Activated CD4-positive, alpha-beta memory T cell treated with anti-CD3 and anti-CD28 coated beads, Interleukin-2, amount 10 ng/mL, durations not matched to agents 7 days and 5 days (primary cell): ENCODE measurements at regions of chr1 and their contacts with region 1.

Region 1: DNA sequence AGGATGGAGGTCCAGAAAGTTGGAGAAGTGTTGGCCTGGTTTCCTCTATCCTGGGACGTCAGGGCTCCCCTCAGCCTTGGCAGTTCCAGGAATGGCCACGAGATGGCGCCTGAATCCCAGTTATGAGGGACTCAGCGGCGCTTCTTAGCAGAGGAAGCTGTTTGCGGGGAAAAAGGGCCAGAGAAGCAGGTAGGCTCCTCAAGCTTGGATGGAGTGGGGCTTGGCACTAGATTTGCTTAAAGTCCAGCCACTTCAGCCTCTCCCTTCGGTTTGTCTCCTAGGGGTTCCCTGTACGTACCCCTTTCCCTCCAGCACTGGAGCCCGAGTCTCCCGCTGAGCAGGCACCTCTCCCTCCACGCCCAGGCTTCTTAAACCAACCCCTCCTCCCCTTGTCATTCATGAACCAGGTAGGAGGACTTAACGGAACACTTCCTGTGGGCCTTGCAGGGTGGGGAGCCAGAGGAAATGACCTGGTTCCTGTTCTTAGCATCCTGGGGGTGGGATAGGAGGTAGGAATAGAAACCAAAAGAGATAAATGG is 32.0 kb upstream of the TENT5B start:
- DNase-seq: peak; percentile 90
- H3K4me3 Mint-ChIP-seq: peak overlapping the region; percentile 76
- H3K27ac Mint-ChIP-seq: peak overlapping the region; percentile 78
- H3K4me1 Mint-ChIP-seq: peaks cover 24% of the 10 kb centered on the region
- H3K27me3 Mint-ChIP-seq: peaks cover 4% of the 10 kb centered on the region

Region 2: DNA sequence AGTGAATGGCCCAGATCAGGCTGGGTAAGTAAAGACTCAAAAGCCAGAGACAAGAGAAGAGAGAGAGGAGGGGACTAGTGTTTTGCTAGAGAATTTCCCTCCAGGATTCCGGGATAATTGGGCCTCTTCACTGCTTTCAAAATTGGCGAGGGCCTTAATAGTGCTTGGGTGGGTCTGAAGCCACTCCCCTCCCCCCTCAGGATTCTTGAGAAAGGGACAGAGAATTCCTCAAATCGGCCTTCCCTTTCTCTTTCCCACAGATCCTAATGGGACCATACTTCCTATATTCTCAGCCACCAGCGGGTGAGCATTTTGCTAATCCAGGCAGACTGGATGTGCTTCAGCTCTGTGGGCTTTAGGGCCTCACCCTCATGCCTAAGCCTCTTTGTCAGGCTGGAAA is 169.8 kb before region 1 on chr1:
- CTCF ChIA-PET with region 1: no interaction called
- POLR2A ChIA-PET with region 1: no interaction called
- DNase-seq: no peak
- H3K4me3 Mint-ChIP-seq: no peak overlapping the region
- H3K27ac Mint-ChIP-seq: no peak overlapping the region
- H3K4me1 Mint-ChIP-seq: peaks cover 10% of the 10 kb centered on the region
- H3K27me3 Mint-ChIP-seq: no peaks in the 10 kb centered on the region

Region 3: DNA sequence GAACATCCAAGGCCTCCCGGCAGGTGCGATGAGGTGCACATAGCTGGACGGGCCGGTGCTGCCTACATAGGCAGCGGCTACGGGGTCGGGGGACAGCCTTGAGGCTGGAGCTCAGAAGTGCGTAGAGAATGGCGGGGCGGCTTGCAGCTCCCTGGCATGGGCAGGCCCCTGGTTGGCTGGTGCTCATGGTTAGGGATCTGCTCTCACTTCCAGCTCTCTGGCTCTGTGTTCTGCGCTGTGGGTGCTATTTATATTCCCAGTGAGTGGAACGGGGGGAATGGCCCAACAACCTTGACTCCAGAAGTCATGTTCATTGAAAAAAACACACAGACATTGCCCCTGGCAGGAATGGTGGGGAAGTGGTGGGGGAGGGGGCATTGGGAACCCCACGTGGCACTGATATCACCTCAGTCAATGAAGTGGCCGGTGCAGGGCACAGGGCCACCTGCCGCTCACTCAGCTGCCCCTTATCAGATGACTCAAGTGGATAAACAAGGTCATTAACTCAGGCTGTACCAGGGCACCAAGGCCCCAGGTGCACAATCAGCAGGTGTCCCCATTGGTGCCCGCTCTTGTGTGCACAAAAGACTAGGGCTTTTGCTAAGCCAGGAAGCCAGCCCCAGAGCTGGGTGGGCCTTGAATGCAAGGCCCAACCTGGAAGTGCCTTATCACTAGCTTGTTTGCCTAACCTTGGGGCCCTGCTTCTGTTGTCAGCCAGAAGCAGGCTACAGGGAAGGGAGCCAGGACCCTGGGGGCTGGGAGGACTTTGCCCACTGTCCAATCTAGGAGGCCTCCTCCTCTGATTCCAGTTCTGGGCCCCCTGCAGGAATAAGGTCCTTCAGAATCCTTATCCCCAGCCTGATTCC is 130.7 kb before region 1 on chr1 and contains the start of gene NR0B2:
- CTCF ChIA-PET with region 1: no interaction called
- POLR2A ChIA-PET with region 1: no interaction called
- DNase-seq: no peak
- H3K4me3 Mint-ChIP-seq: no peak within 1 kb of the TSS
- H3K27ac Mint-ChIP-seq: no peak within 1 kb of the TSS
- H3K4me1 Mint-ChIP-seq: no peaks in the 10 kb centered on the region
- H3K27me3 Mint-ChIP-seq: peaks cover 5% of the 10 kb centered on the region
- total RNA-seq, gene NR0B2: not detected

Region 4: DNA sequence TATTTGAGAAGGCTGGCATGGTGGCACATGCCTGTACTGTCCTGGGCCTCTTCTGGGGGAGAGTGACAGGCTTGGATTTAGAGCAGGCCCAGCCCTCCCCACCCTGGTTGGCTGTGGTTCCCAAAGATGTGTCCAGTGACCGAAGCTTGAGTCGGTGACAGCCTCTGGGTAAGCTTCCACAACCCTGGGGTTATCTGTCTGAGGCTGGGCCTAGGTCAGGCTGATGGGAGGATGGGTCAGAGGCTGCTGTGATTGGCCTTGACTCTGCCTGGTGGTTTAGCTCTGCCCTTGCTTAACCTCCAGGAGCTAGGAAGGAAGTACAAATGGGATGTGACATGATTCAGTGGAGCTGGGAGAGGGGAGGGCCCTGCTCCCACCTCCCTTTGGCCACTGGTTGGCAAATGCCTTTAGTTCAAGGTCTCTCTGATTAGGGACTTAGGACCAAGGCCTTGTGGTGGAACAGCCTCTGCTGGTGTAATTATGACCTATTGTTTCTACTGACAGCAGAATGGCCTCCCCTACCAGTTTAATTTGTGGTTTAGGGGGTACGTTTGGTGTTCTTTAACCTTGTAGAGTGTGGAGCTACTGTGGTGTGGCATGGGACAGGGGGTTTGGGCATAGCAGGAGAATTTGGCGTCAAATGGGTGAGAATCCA is 106.6 kb before region 1 on chr1:
- CTCF ChIA-PET with region 1: no interaction called
- POLR2A ChIA-PET with region 1: no interaction called
- DNase-seq: no peak
- H3K4me3 Mint-ChIP-seq: no peak overlapping the region
- H3K27ac Mint-ChIP-seq: no peak overlapping the region
- H3K4me1 Mint-ChIP-seq: peaks cover 5% of the 10 kb centered on the region
- H3K27me3 Mint-ChIP-seq: no peaks in the 10 kb centered on the region

Region 5: DNA sequence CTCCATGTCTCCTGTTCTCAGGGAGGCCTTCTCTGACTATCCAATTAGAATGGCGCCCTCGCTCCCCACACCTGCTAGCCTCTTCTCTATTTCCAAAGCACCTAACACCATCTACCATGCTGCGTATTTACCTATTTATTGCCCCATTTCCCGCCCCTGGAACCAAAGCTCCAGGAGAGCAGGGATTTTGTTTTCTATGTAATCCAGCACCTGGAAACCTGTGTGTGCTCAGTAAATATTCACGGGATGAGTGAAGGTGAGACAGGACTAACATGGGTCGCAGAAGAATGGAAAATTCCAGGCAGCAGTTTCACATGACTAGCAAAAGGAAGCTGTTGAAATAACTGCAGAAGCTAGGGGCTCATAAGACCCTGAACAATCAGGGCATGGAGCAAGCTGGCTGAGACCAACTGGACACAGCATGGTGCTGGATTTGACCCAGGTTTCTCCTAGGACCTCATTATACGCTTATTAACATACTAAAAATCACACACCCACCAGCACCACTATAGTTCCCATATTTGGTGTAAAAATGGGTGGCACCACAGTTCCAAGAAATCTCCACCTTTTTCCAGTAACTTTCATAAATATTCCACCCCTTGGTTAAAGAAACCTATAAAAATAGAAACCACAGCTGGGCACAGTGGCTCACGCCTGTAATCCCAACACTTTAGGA is 17.0 kb before region 1 on chr1:
- CTCF ChIA-PET with region 1: interaction called, 17 read pairs
- POLR2A ChIA-PET with region 1: no interaction called
- DNase-seq: no peak
- H3K4me3 Mint-ChIP-seq: no peak overlapping the region
- H3K27ac Mint-ChIP-seq: no peak overlapping the region
- H3K4me1 Mint-ChIP-seq: peaks cover 7% of the 10 kb centered on the region
- H3K27me3 Mint-ChIP-seq: peaks cover 10% of the 10 kb centered on the region

Region 6: DNA sequence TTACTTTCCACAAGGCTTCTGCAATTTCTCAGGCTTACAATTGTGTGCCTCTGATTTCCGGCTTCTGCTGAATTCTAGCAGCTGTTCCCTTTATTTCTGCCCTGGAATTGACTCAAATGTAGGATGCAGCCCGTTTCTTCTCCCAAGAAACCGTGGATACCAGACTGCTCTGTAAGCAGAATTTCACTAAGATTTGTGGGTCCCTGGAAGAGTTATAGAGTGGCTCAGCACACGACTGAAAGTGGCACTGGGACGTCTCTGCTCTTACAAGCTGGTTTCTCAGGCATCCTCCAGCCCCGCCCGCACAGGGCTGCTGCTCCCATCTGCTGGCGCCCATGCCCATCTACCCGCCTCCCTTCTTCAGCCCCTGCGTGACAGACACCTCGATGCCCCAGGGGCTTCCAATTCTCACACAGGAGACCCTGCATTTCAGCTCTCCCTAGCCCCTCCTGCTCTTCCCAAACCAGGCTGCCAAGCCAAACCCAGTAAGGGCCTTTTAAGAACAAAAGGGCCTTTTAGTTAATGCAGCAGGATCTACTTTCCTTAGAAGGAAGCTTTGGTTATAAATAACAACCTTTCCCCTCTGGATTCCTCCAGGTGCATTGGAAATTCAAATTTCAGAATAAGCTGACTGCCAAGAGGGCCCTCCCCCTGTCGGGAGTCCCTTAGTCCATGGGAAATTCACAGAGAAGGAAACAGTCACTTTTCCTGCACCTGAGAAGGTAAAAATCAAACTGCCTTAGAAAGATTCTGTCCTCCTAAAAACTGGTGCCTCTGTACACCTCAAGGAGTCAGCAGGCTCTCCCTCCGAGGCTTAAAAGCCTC is 13.3 kb after region 1 on chr1:
- CTCF ChIA-PET with region 1: interaction called, 28 read pairs
- POLR2A ChIA-PET with region 1: no interaction called
- DNase-seq: no peak
- H3K4me3 Mint-ChIP-seq: no peak overlapping the region
- H3K27ac Mint-ChIP-seq: no peak overlapping the region
- H3K4me1 Mint-ChIP-seq: no peaks in the 10 kb centered on the region
- H3K27me3 Mint-ChIP-seq: peaks cover 1% of the 10 kb centered on the region

Region 7: GRCh38 chr1:27097484-27097917 is 52.8 kb after region 1 on chr1:
- CTCF ChIA-PET with region 1: interaction called, 284 read pairs
- POLR2A ChIA-PET with region 1: interaction called, 17 read pairs
- DNase-seq: peak; percentile 80
- H3K4me3 Mint-ChIP-seq: no peak overlapping the region
- H3K27ac Mint-ChIP-seq: no peak overlapping the region
- H3K4me1 Mint-ChIP-seq: peaks cover 12% of the 10 kb centered on the region
- H3K27me3 Mint-ChIP-seq: no peaks in the 10 kb centered on the region

Region 8: GRCh38 chr1:27154991-27155781 is 110.5 kb after region 1 on chr1 and contains the start of gene SLC9A1:
- CTCF ChIA-PET with region 1: interaction called, 11 read pairs
- POLR2A ChIA-PET with region 1: no interaction called
- DNase-seq: peak; percentile 93
- H3K4me3 Mint-ChIP-seq: peak within 1 kb of the TSS; percentile 88
- H3K27ac Mint-ChIP-seq: peak within 1 kb of the TSS; percentile 86
- H3K4me1 Mint-ChIP-seq: peaks cover 44% of the 10 kb centered on the region
- H3K27me3 Mint-ChIP-seq: no peaks in the 10 kb centered on the region
- total RNA-seq, gene SLC9A1: 26.6 to 27.5 TPM

Region 9: DNA sequence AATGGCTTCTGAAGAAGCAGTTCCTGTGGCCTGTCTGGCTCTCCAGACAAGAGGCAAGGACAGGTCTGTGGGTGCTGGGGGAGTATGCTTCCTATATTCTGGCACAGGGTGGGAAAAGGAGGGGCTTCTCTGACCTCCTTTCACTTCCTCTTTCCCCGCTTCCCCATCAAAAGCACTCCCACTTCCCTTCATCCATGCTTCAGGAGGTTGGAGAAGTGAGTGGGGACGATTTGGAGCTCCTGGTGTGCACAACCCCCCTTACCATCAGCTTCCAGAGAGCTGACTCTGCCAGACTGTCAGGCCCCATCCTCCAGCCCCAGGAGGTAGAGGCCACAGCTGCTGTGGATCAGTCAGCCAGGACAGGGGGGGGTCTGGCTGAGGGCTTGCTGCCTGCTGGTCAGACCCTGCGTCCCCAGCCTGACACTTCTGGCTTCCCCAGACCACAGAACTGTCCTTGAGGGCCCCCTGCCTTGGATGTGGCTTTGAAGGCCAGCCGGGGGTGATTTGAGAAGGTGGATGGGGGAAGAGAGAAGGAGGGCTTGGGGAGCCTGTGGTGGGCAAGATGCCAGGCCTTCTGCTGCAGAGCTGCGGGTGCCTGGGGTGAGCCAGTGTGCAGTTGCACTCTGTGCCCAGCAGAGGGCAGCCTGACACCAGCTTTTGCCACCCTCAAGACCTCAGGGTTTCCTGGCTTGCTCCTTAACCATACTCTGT is 255.8 kb after region 1 on chr1:
- CTCF ChIA-PET with region 1: interaction called, 12 read pairs
- POLR2A ChIA-PET with region 1: no interaction called
- DNase-seq: peak; percentile 78
- H3K4me3 Mint-ChIP-seq: no peak overlapping the region
- H3K27ac Mint-ChIP-seq: no peak overlapping the region
- H3K4me1 Mint-ChIP-seq: peaks cover 4% of the 10 kb centered on the region
- H3K27me3 Mint-ChIP-seq: no peaks in the 10 kb centered on the region

Region 10: GRCh38 chr1:27489910-27490741 is 445.4 kb after region 1 on chr1 and contains the start of gene WASF2:
- CTCF ChIA-PET with region 1: no interaction called
- POLR2A ChIA-PET with region 1: no interaction called
- DNase-seq: peak; percentile 98
- H3K4me3 Mint-ChIP-seq: peak within 1 kb of the TSS; percentile 94
- H3K27ac Mint-ChIP-seq: peak within 1 kb of the TSS; percentile 96
- H3K4me1 Mint-ChIP-seq: peaks cover 42% of the 10 kb centered on the region
- H3K27me3 Mint-ChIP-seq: no peaks in the 10 kb centered on the region
- total RNA-seq, gene WASF2: 150 TPM